Activated naive CD8-positive, alpha-beta T cell treated with anti-CD3 and anti-CD28 coated beads, Interleukin-2, amount 10 ng/mL, durations not matched to agents 7 days and 5 days (primary cell): ENCODE measurements at regions of chr3 and their contacts with region 1.

Region 1: GRCh38 chr3:50337191-50337841 is 3.3 kb downstream of the RASSF1 start:
- DNase-seq: peak; percentile 93
- ATAC-seq: peak; percentile 69
- H3K4me3 Mint-ChIP-seq: peak overlapping the region; percentile 99
- H3K27ac Mint-ChIP-seq: peak overlapping the region; percentile 99
- H3K4me1 Mint-ChIP-seq: peaks cover 43% of the 10 kb centered on the region
- H3K27me3 Mint-ChIP-seq: no peaks in the 10 kb centered on the region

Region 2: DNA sequence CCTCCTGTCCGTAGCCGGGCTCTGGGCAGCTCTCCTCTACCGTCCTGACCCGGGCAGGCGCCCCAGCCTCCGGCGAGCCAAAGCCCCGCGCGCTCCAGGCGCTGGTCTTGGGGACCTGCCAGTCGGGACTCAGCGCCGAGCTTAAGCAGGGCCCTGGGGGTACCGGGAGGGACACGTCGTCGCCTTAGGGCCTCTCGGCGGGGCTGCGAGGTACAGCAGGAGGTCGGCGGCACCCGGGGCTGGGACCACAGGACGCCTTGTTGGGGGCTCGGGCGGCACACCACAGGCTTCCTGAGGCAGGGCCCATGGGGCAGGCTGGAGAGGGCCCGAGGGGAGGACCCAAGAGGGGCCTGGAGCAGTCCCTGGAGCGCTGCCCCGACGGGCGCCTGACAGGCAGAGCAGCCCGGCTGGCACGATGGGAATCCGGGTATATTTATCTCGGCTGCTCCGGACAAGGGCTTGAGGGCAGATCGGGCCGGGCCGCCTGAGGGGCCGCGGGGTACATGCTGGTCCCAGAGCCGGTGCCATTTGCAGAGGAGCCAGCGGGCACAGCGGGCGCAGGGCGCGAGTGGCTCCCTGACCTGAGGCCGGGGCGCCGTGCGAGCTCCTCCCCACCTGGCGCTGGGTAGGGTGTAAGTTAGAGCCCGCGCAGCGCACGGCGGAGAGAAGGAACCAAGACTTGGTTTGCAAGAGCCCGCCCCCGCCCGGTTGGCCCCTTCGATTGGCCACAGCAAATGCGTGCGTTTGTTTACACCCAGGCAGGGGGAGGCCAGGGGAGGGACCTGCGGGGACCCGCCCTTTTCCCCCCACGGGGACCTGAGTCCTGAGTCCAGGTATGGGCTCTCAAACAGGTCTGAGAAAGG is 131.7 kb before region 1 on chr3:
- POLR2A ChIA-PET with region 1: no interaction called
- DNase-seq: peak; percentile 55
- ATAC-seq: peak; percentile 61
- H3K4me3 Mint-ChIP-seq: no peak overlapping the region
- H3K27ac Mint-ChIP-seq: no peak overlapping the region
- H3K4me1 Mint-ChIP-seq: no peaks in the 10 kb centered on the region
- H3K27me3 Mint-ChIP-seq: peaks cover 52% of the 10 kb centered on the region

Region 3: GRCh38 chr3:50245831-50246516 is 91.3 kb before region 1 on chr3:
- POLR2A ChIA-PET with region 1: interaction called, 12 read pairs
- DNase-seq: peak; percentile 99
- ATAC-seq: peak; percentile 78
- H3K4me3 Mint-ChIP-seq: peak overlapping the region; percentile 86
- H3K27ac Mint-ChIP-seq: peak overlapping the region; percentile 85
- H3K4me1 Mint-ChIP-seq: peaks cover 55% of the 10 kb centered on the region
- H3K27me3 Mint-ChIP-seq: no peaks in the 10 kb centered on the region

Region 4: DNA sequence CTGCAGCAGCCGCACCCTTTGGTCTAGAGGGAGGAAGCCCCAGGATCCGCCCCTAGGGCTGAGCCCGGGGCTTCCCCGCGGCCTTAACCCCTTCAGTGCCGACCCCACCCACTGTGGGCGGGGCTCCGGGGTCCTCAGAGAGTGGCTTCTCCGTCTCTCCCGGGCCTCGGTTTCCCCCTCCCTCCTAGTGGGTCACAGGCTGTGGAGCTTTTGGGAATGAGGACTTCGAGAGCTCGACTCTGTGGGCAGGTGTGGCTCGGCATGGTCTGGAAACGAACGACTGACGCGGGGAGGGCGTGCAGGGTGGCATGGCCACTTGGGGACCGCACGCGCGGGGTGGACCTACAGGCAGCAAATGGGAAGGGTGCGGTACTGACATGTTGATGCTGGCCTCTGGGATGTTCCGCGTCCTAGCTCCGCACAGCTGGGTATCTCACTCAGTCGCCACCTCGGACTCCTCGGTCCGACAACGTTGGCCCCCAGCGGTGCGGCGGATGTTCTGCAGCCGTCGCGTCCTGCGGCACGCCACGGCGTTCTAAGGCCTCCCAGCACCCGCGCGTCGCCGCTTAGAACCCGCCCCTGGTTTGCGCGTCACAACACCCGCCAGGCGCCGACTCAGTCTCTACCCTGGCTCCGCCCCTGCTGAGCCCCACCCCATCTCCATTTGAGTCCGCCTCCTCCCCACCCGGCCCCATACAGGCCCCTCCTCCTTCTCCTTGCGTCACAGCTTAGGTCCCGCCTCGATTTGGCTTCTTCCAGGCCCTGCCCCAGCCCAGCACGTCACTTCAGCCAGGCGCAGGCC is 38.3 kb before region 1 on chr3 and contains the starts of genes HYAL3 and NAA80:
- POLR2A ChIA-PET with region 1: interaction called, 89 read pairs
- DNase-seq: peak; percentile 98
- ATAC-seq: peak; percentile 84
- H3K4me3 Mint-ChIP-seq: peak within 1 kb of the TSS; percentile 96
- H3K27ac Mint-ChIP-seq: peak within 1 kb of the TSS; percentile 98
- H3K4me1 Mint-ChIP-seq: peaks cover 18% of the 10 kb centered on the region
- H3K27me3 Mint-ChIP-seq: no peaks in the 10 kb centered on the region
- total RNA-seq, gene HYAL3: 5.9 to 7.0 TPM
- total RNA-seq, gene NAA80: 34.3 to 37.7 TPM

Region 5: GRCh38 chr3:50350527-50351322 is 13.4 kb after region 1 on chr3 and contains the starts of genes CYB561D2 and NPRL2:
- POLR2A ChIA-PET with region 1: interaction called, 110 read pairs
- DNase-seq: peak; percentile 99
- ATAC-seq: peak; percentile 90
- H3K4me3 Mint-ChIP-seq: peak within 1 kb of the TSS; percentile 90
- H3K27ac Mint-ChIP-seq: peak within 1 kb of the TSS; percentile 93
- H3K4me1 Mint-ChIP-seq: peaks cover 46% of the 10 kb centered on the region
- H3K27me3 Mint-ChIP-seq: no peaks in the 10 kb centered on the region
- total RNA-seq, gene CYB561D2: 35.0 to 38.9 TPM
- total RNA-seq, gene NPRL2: 55.8 to 58.2 TPM

Region 6: DNA sequence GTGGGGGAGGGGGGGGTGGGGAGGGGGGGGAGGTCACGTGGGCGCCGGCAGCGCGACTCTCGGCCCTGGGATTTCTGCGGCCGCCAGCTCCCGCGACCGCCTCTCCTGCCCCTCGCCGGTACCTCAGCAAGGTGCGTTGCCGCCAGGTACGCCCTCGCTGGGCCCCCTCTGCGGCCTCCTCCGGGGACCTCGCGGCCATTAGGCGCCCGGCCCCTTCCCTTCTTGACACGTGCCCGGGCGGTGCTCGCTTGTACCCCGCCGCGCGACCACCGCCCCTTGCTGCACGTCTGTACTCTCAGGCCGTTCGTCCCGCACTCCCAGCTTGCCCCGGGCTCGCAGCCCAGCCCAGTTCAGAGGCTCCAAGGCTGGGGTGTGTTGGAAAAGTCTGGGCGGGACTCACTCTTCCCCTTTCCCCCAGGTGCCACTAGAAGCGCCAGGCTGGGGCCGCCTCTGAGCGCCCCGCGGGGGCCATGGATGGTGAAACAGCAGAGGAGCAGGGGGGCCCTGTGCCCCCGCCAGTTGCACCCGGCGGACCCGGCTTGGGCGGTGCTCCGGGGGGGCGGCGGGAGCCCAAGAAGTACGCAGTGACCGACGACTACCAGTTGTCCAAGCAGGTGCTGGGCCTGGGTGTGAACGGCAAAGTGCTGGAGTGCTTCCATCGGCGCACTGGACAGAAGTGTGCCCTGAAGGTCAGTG is 279.9 kb after region 1 on chr3 and contains the start of gene MAPKAPK3:
- POLR2A ChIA-PET with region 1: interaction called, 439 read pairs
- DNase-seq: no peak
- ATAC-seq: peak; percentile 2
- H3K4me3 Mint-ChIP-seq: peak within 1 kb of the TSS; percentile 97
- H3K27ac Mint-ChIP-seq: peak within 1 kb of the TSS; percentile 95
- H3K4me1 Mint-ChIP-seq: peaks cover 61% of the 10 kb centered on the region
- H3K27me3 Mint-ChIP-seq: no peaks in the 10 kb centered on the region
- total RNA-seq, gene MAPKAPK3: 176 to 195 TPM